Natural killer cell (primary cell): ENCODE measurements at regions of chr20 and their contacts with region 1.

Region 1: GRCh38 chr20:61896058-61896961 is 169.4 kb downstream of the TAF4 start:
- DNase-seq: peak; percentile 30 to 51
- ATAC-seq: peak in 2 of 3 donors; percentile 70 to 72
- H3K4me3 ChIP-seq: no peak overlapping the region
- H3K4me3 Mint-ChIP-seq: no peak overlapping the region
- H3K27ac ChIP-seq: no peak overlapping the region
- H3K27ac Mint-ChIP-seq: no peak overlapping the region
- H3K4me1 ChIP-seq: no peaks in the 10 kb centered on the region
- H3K4me1 Mint-ChIP-seq: peaks cover 0 to 6% of the 10 kb centered on the region in 2 donors
- H3K27me3 ChIP-seq: no peaks in the 10 kb centered on the region
- H3K27me3 Mint-ChIP-seq: peaks cover 0 to 3% of the 10 kb centered on the region in 2 donors
- CTCF ChIP-seq: peak; percentile 66

Region 2: GRCh38 chr20:59940174-59940971 is 1955.9 kb before region 1 on chr20 and contains the starts of genes FAM217B and PPP1R3D:
- intact Hi-C with region 1: loop called (anchors 10 kb)
- DNase-seq: peak; percentile 84 to 94
- ATAC-seq: peak; percentile 96 to 97 (median 97)
- H3K4me3 ChIP-seq: peak within 1 kb of the TSS; percentile 52
- H3K4me3 Mint-ChIP-seq: peak within 1 kb of the TSS; percentile 94
- H3K27ac ChIP-seq: peak within 1 kb of the TSS; percentile 70
- H3K27ac Mint-ChIP-seq: peak within 1 kb of the TSS; percentile 89 to 93
- H3K4me1 ChIP-seq: peaks cover 18% of the 10 kb centered on the region
- H3K4me1 Mint-ChIP-seq: peaks cover 35 to 46% of the 10 kb centered on the region in 2 donors
- H3K27me3 ChIP-seq: no peaks in the 10 kb centered on the region
- H3K27me3 Mint-ChIP-seq: no peaks in the 10 kb centered on the region
- CTCF ChIP-seq: no peak
- total RNA-seq, gene FAM217B: 17.1 to 31.1 (median 27.7) TPM
- total RNA-seq, gene PPP1R3D: 3.5 to 6.9 (median 6.7) TPM